ENCODE measurements at regions of chr3 and their contacts with region 1.

Region 1: DNA sequence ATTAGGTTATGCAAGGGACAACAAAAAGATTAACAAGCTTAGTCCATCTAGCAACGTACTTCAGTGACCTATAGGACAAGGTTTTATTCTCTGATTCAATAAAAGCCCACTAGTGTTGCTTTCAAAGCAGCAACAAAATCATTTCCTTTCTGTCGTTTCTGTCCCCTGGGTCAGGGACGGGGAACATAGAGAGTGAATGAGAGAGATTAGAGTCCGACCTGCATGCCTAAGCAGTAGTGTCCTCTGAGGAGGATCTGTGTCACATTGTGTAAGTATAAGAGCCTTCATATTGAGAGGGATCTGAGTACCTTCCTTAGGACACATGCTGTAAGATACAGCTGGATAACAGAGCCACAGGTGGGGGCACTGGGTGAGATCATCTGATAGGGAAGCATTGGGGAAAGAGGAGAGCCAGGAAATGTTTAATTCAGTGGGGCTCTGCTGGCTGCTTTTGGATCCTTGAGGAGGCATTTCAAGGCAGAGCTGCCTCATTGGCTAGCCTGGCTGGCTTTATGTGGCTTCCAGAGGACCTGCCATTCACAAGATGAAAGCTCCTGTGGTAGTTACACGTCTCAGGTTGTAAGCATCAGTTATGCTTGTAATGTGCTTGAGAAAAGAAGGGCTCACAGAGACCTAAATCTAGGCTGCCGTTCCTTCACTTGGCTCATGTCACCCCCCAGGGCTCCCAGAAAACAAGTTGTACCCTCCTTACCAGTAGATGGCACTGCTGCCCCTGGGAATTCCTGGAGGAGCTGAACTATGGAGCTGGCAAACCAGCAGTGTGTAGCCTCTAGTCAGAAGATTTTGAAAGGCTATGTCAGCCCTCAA is 2.7 kb downstream of the TMEM108 start:
- DNase-seq: peak; percentile 56 to 89
- H3K4me3 ChIP-seq: no peak overlapping the region
- CTCF ChIP-seq: peak in 1 of 3 donors; percentile 21
- POLR2A ChIP-seq: no peak

Region 2: DNA sequence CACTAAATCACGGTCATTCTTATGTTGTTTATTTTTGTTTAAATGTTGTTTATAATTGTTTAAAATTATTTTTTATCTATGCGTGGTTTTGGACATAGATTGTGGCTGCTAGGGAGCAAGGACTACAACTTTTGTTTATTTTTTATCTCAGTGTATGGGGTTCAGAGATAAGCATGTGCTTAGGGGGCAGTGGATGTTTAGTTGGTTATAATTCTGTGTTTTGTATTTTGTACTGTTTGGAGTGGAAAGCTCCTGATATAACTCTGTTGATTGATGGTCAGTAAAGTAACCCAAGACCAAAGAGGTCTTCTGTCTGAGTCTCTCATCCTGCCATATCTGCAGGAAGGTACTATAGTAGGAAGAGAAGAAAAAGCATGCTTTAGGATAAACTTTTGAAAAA is 282.2 kb before region 1 on chr3:
- intact Hi-C with region 1: no loop called
- DNase-seq: no peak
- H3K4me3 ChIP-seq: no peak overlapping the region
- CTCF ChIP-seq: no peak
- POLR2A ChIP-seq: no peak

Region 3: GRCh38 chr3:133113526-133113925 is 72.6 kb after region 1 on chr3:
- intact Hi-C with region 1: no loop called
- DNase-seq: no peak
- H3K4me3 ChIP-seq: no peak overlapping the region
- CTCF ChIP-seq: no peak
- POLR2A ChIP-seq: no peak

Region 4: GRCh38 chr3:133384331-133385027 is 343.6 kb after region 1 on chr3:
- intact Hi-C with region 1: loop called (anchors 10 kb)
- DNase-seq: peak in 1 of 2 donors; percentile 84
- H3K4me3 ChIP-seq: no peak overlapping the region
- CTCF ChIP-seq: no peak
- POLR2A ChIP-seq: no peak

Region 5: GRCh38 chr3:134232151-134232550 is 1191.2 kb after region 1 on chr3:
- intact Hi-C with region 1: no loop called
- DNase-seq: no peak
- H3K4me3 ChIP-seq: no peak overlapping the region
- CTCF ChIP-seq: no peak
- POLR2A ChIP-seq: no peak

Measured in lower leg skin (tissue), 4 donors.